ENCODE measurements at regions of chr21 and their contacts with region 1.

Region 1: DNA sequence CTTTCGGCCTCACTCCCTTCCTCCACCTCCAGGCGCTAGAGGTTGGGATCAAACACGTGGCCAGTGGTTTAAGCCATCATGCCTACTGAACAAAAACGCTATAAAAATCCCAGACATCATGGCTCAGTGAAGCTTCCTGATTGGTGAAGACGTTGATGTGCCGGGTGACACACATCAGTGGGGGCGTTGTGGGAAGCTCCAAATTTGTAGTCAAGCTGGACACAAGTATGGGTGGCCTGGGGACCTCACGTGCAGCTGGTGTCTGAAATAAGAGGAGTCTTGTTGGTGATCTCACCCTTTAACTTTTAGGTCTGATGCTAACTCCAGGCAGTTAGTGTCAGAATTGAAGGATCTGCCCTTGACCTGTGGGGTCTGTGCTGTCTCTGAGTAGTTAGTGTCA is 6.7 kb downstream of the CFAP298 start:
- DNase-seq: no peak
- H3K4me3 ChIP-seq: no peak overlapping the region
- CTCF ChIP-seq: no peak

Region 2: GRCh38 chr21:32406405-32406804 is 199.1 kb before region 1 on chr21:
- in situ Hi-C with region 1: loop called (anchors 5 kb)
- DNase-seq: no peak
- H3K4me3 ChIP-seq: no peak overlapping the region
- CTCF ChIP-seq: no peak